ENCODE measurements at regions of chr13 and their contacts with region 1.

Region 1: DNA sequence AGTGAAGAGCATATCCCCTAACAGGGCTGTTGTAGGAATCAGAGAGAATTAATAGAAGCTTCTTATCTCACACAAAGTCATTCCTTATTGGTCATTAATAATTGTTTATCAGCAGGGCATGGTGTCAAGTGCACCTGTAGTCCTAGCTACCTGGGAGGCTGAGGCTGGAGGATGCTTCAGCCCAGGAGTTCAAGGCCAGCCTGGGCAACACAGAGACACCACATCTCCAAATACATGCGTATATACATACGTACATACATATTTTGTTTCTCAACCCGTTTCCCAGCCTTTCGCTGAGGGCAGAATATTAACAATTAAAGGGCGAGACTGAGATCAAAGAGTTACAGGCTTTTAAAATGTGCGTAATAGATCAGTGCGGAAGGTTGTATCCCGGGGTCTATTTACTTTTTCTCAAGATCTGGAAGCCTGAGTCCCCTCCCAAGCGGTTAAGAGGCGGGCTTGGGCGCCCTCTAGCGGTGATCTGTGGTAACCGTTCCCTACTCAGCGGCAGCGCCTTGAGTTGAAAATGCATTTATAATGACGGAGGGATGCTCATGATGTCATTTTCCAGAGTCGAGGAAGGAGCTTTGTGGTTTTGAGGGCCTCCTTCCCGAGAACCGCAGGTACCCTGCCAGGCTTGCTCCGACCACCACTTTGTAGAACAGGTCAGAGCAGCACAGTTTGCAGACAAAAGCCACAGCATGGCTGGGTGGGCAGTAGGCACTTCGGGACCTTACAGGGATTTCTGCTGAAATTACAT is 169.6 kb upstream of the GPR12 start:
- DNase-seq: peak; percentile 79
- H3K4me3 ChIP-seq: peak overlapping the region; percentile 31 to 51
- H3K27ac ChIP-seq: no peak overlapping the region
- H3K4me1 ChIP-seq: peaks cover 0 to 2% of the 10 kb centered on the region in 2 experiments; a peak in 1 of 4 replicates
- H3K27me3 ChIP-seq: 0 out of 2 replicates have a peak, but pooled peaks cover 2% of the 10 kb centered on the region
- CTCF ChIP-seq: peak; percentile 97
- EP300 ChIP-seq: no peak
- RAD21 ChIP-seq: peak; percentile 89

Region 2: GRCh38 chr13:26186118-26186870 is 743.9 kb before region 1 on chr13:
- CTCF ChIA-PET with region 1: interaction called, 10 read pairs
- POLR2A ChIA-PET with region 1: no interaction called
- DNase-seq: peak; percentile 90
- H3K4me3 ChIP-seq: peak overlapping the region; percentile 60 to 63
- H3K27ac ChIP-seq: peak overlapping the region; percentile 12 to 25; a peak in 2 of 4 replicates
- H3K4me1 ChIP-seq: peaks cover 0 to 6% of the 10 kb centered on the region in 2 experiments; a peak in 1 of 4 replicates
- H3K27me3 ChIP-seq: no peaks in the 10 kb centered on the region
- CTCF ChIP-seq: peak; percentile 62
- EP300 ChIP-seq: no peak
- RAD21 ChIP-seq: peak; percentile 37; the same call in 1 of the 2 replicates

Region 3: GRCh38 chr13:26713341-26713740 is 216.8 kb before region 1 on chr13:
- CTCF ChIA-PET with region 1: interaction called, 74 read pairs
- POLR2A ChIA-PET with region 1: no interaction called
- DNase-seq: no peak
- H3K4me3 ChIP-seq: no peak overlapping the region
- H3K27ac ChIP-seq: no peak overlapping the region
- H3K4me1 ChIP-seq: no peaks in the 10 kb centered on the region
- H3K27me3 ChIP-seq: no peaks in the 10 kb centered on the region
- CTCF ChIP-seq: no peak
- EP300 ChIP-seq: no peak
- RAD21 ChIP-seq: no peak

Region 4: DNA sequence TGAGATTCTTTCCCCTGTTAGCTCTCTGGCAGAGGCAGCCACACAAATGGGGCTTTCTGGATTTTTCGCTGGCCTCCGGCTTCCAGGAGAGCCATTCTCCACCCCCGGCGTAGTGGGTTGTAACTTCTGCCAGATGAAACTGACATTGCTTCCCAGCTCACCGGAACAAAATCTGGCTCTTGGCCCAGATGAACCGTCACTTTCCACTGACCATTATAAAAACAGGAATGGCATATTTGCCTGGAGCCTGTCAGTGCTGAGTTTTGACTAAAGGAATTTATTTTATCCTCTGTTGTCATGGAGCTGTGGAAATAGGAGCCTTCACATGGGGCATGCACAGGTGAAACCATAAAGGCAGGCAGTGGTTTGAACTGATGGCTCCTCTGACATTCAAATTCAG is 49.0 kb before region 1 on chr13:
- CTCF ChIA-PET with region 1: interaction called, 14 read pairs
- POLR2A ChIA-PET with region 1: no interaction called
- DNase-seq: peak; percentile 56
- H3K4me3 ChIP-seq: peak overlapping the region in 1 of 2 experiments; percentile 49; a peak in 2 of 4 replicates
- H3K27ac ChIP-seq: no peak overlapping the region
- H3K4me1 ChIP-seq: peaks cover 0 to 13% of the 10 kb centered on the region in 2 experiments; a peak in 2 of 4 replicates
- H3K27me3 ChIP-seq: no peaks in the 10 kb centered on the region; the same call in 1 of the 2 replicates
- CTCF ChIP-seq: no peak
- EP300 ChIP-seq: no peak
- RAD21 ChIP-seq: no peak

Region 5: DNA sequence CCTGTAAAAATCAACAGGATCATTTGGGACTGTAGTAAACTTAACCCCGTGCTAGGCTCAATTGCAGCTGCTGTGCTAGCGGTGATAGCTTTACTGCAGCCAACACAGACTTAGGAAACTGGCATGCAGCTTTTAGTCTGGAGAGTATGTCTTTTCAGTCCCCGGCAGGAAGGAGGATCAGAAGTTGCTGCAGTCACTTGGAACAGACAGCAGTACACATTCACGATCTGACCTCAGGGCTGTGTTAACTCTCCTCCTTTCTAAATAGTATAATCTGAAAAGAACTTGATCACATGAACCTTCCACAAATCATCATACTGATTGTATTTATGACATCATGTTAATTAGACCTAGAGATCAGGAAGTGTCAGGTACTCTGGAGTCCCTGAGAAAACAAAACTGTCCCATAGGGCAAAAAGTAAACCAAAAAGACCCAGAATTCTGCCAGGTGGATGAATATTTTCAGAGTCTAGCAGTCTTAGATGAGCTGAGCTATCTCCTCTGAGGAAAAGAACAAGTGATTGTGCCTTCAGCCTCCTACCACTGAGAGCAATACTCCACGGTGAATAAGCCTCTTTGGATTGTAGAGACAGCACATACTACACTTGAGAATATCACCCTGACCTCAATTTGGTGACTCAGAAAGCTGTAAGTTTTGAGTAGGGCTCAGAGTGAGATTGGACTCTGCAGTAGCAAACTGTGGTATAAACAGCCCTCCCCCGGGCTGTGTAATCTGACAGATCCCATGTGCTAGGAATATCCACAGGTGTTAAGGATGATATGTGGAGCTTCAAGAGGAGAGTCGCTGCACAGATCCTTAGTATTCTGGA is 11.4 kb after region 1 on chr13:
- CTCF ChIA-PET with region 1: interaction called, 37 read pairs
- POLR2A ChIA-PET with region 1: interaction called, 4 read pairs
- DNase-seq: no peak
- H3K4me3 ChIP-seq: no peak overlapping the region
- H3K27ac ChIP-seq: no peak overlapping the region
- H3K4me1 ChIP-seq: no peaks in the 10 kb centered on the region
- H3K27me3 ChIP-seq: no peaks in the 10 kb centered on the region; the same call in 1 of the 2 replicates
- CTCF ChIP-seq: no peak
- EP300 ChIP-seq: no peak
- RAD21 ChIP-seq: no peak

Region 6: GRCh38 chr13:27182844-27183497 is 252.8 kb after region 1 on chr13:
- CTCF ChIA-PET with region 1: no interaction called
- POLR2A ChIA-PET with region 1: no interaction called
- DNase-seq: no peak
- H3K4me3 ChIP-seq: 0 out of 4 replicates have a peak overlapping the region, but pooled peaks of 1 of the 2 experiments have one; percentile 40
- H3K27ac ChIP-seq: peak overlapping the region; percentile 40 to 89; a peak in 3 of 4 replicates
- H3K4me1 ChIP-seq: peaks cover 0 to 4% of the 10 kb centered on the region in 2 experiments; a peak in 1 of 4 replicates
- H3K27me3 ChIP-seq: no peaks in the 10 kb centered on the region
- CTCF ChIP-seq: no peak
- EP300 ChIP-seq: peak in 1 of 2 experiments; percentile 94; a peak in 2 of 4 replicates
- RAD21 ChIP-seq: no peak